ENCODE measurements at regions of chrX and their contacts with region 1.

Region 1: GRCh38 chrX:119852382-119853353 is at the start of gene UPF3B:
- DNase-seq: peak; percentile 97
- ATAC-seq: peak; percentile 96
- H3K4me3 ChIP-seq: peak within 1 kb of the TSS; percentile 63 to 83 (median 80)
- H3K27ac ChIP-seq: peak within 1 kb of the TSS; percentile 89
- H3K4me1 ChIP-seq: 0 out of 2 replicates have a peak, but pooled peaks cover 27% of the 10 kb centered on the region
- H3K27me3 ChIP-seq: no peaks in the 10 kb centered on the region
- CTCF ChIP-seq: peak; percentile 8; the same call in 1 of the 2 replicates
- EP300 ChIP-seq: no peak
- POLR2A ChIP-seq: peak; percentile 74 to 77
- RAD21 ChIP-seq: no peak
- total RNA-seq, gene UPF3B: 7.2 and 8.2 TPM in 2 replicates

Region 2: GRCh38 chrX:119826399-119826959 is 26.2 kb before region 1 on chrX:
- CTCF ChIA-PET with region 1: no interaction called
- POLR2A ChIA-PET with region 1: interaction called, 10 read pairs
- in situ Hi-C with region 1: no loop called
- intact Hi-C with region 1: no loop called
- DNase-seq: peak; percentile 76
- ATAC-seq: peak; percentile 77
- H3K4me3 ChIP-seq: peak overlapping the region in 1 of 3 experiments; percentile 10; a peak in 1 of 6 replicates
- H3K27ac ChIP-seq: peak overlapping the region; percentile 71
- H3K4me1 ChIP-seq: peaks cover 36% of the 10 kb centered on the region
- H3K27me3 ChIP-seq: no peaks in the 10 kb centered on the region
- CTCF ChIP-seq: no peak
- EP300 ChIP-seq: 0 out of 4 replicates have a peak, but pooled peaks of 1 of the 2 experiments have one; percentile 41
- POLR2A ChIP-seq: no peak
- RAD21 ChIP-seq: no peak

Region 3: GRCh38 chrX:119871599-119872395 is 19.1 kb after region 1 on chrX and contains the starts of genes NDUFA1 and RNF113A:
- CTCF ChIA-PET with region 1: no interaction called
- POLR2A ChIA-PET with region 1: interaction called, 27 read pairs
- in situ Hi-C with region 1: no loop called
- intact Hi-C with region 1: loop called (anchors 2 kb)
- DNase-seq: peak; percentile 76
- ATAC-seq: peak; percentile 95
- H3K4me3 ChIP-seq: peak within 1 kb of the TSS; percentile 70 to 82 (median 74)
- H3K27ac ChIP-seq: peak within 1 kb of the TSS; percentile 99
- H3K4me1 ChIP-seq: peaks cover 4% of the 10 kb centered on the region; the same call in 1 of the 2 replicates
- H3K27me3 ChIP-seq: no peaks in the 10 kb centered on the region; a peak in 1 of 5 replicates
- CTCF ChIP-seq: no peak
- EP300 ChIP-seq: no peak
- POLR2A ChIP-seq: peak; percentile 86 to 90
- RAD21 ChIP-seq: no peak
- total RNA-seq, gene NDUFA1: 167 and 181 TPM in 2 replicates
- total RNA-seq, gene RNF113A: 15.4 and 21.4 TPM in 2 replicates

Region 4: DNA sequence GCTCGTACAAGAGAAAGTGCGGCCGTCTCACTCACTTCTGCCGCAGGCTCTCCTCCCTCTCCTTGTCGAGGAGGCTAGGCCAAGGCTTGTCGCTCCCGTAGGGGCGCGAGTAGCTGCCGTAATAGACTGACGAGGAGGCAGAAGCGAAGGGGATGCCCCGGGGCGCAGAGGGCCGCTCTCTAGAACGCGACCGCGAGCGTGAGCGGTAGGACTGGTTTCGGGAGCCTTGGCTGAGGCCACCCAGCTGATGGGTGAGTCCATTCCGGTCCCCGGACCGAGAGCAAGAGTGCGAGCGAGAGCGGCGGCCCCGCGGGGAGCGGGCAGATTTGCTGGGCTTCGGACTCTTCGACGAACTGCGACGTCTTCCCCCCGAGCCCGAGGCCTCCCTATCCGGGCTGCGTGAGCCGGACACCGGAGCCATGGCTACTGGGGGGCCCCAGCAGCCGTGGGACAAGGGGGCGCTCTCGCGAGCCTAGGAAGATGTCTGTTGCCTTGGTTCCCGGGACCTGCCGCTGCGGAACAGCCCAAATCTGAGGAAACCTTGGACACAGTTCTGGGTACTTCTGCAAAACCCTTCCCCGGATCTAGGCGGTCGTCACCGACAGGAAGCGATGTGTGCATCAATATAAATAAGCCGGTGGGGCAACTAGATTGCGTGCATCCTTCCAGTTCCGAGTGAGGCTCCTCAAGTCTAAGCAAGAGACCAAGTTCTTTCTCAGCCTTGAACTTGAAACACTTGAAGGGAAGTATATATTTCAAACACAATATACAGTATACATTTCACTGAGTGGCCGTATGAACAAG is 90.7 kb after region 1 on chrX and contains the start of gene NKAP:
- CTCF ChIA-PET with region 1: no interaction called
- POLR2A ChIA-PET with region 1: no interaction called
- in situ Hi-C with region 1: no loop called
- intact Hi-C with region 1: loop called (anchors 1 kb)
- DNase-seq: peak; percentile 86
- ATAC-seq: peak; percentile 93
- H3K4me3 ChIP-seq: peak within 1 kb of the TSS; percentile 67 to 85 (median 76)
- H3K27ac ChIP-seq: peak within 1 kb of the TSS; percentile 89
- H3K4me1 ChIP-seq: peaks cover 12% of the 10 kb centered on the region
- H3K27me3 ChIP-seq: no peaks in the 10 kb centered on the region
- CTCF ChIP-seq: peak; percentile 65
- EP300 ChIP-seq: peak in 1 of 2 experiments; percentile 41; a peak in 1 of 4 replicates
- POLR2A ChIP-seq: peak; percentile 59 to 74
- RAD21 ChIP-seq: 0 out of 2 replicates have a peak, but pooled peaks have one; percentile 10
- total RNA-seq, gene NKAP: 6.1 and 9.0 TPM in 2 replicates

Region 5: DNA sequence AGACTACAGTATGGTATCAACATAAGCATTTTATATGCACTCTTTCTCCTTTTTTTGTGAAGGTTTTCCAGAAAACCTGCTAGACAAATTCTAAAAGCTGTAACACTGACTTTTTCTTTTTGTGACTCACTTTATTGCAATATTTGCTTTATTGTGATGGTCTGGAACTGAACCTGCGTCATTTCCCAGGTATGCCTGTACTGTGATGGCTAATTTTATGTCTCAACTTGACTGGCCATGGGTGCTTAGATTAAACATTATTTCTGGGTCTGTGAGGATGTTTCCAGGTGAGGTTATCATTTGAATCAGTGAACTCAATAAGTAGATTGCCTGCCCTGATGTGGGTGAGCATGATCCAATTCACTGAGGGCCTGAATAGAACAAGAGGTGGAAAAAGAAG is 651.9 kb after region 1 on chrX:
- CTCF ChIA-PET with region 1: no interaction called
- POLR2A ChIA-PET with region 1: no interaction called
- in situ Hi-C with region 1: no loop called
- intact Hi-C with region 1: no loop called
- DNase-seq: no peak
- ATAC-seq: no peak
- H3K4me3 ChIP-seq: no peak overlapping the region
- H3K27ac ChIP-seq: no peak overlapping the region
- H3K4me1 ChIP-seq: no peaks in the 10 kb centered on the region
- H3K27me3 ChIP-seq: no peaks in the 10 kb centered on the region
- CTCF ChIP-seq: no peak
- EP300 ChIP-seq: no peak
- POLR2A ChIP-seq: no peak
- RAD21 ChIP-seq: no peak

Measured in HepG2 (cell line).